ENCODE measurements at regions of chr15 and their contacts with region 1.

Region 1: DNA sequence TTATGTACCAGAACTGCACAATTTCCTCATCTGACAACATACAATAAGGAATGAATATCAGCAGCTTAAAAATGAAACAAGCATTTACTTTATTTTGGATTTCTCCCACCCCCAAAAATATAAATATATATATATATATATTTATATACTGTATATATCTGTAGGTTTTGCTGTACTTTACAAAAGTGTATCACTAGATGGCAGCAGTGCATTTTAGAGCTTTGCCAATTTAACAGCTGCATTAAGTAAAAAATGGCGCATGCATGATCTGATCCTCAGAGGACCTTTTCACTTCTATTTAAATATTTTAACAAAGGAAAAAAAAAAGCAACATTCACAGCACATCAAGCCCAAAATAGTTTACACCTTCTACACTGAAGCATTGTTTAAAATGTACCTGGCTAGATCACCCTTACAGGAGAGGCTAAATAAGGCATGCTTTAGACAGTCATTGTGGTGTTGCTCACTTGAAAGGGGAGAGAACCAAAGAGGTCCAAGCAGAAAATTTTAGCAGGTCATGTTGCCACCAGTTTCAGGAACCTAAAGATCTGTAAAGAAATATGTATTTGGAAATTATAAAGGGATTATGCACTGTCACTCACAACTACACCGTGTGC is 72.6 kb downstream of the NPTN start:
- DNase-seq: no peak
- H3K4me3 Mint-ChIP-seq: no peak overlapping the region
- H3K27ac Mint-ChIP-seq: no peak overlapping the region
- H3K4me1 Mint-ChIP-seq: peaks cover 8% of the 10 kb centered on the region
- H3K27me3 Mint-ChIP-seq: no peaks in the 10 kb centered on the region

Region 2: DNA sequence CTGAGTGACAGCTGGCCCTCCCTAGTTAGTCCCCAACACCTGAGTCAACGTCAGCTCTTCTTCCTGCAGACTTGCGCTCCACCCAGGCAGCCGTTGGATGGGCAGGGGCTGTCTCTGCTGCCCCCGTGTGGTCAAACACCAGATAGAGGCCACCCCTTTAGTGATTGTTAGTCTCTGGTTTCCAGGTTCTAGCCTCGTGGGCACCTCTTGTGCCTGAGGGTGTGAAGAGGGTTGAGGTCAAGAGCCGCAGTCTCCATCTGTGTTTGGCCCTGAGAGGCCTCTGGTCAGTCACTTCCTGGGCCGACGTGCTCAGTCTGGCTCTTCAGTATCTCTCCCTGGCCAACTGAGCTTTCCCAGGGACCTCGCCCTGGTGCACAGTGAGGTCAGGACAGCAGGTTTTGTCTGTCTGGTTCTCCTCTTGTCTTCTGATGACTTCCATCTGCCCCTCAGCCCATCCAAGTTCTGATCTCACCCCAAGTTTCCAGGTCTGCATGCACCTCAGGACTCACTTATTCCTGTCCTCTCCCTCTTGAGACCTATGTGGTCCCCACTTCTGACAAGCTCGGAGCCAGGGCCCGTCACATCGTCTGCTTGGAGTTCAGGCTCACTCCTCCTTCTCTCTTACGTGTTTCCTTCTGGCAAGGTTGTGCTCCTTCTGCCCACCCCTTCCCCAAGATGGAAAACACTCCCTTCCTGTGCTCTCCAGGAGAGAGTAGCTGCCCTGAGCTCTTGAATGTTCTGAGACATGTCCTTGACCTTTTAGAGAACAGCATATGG is 144.4 kb after region 1 on chr15:
- intact Hi-C with region 1: loop called (anchors 1 kb)
- DNase-seq: peak; percentile 56
- H3K4me3 Mint-ChIP-seq: no peak overlapping the region
- H3K27ac Mint-ChIP-seq: no peak overlapping the region
- H3K4me1 Mint-ChIP-seq: peaks cover 6% of the 10 kb centered on the region
- H3K27me3 Mint-ChIP-seq: peaks cover 4% of the 10 kb centered on the region